ENCODE measurements at regions of chr13 and their contacts with region 1.

Region 1: GRCh38 chr13:35953537-35954206 is 177.5 kb downstream of the DCLK1 start:
- DNase-seq: peak; percentile 60 to 90
- ATAC-seq: peak; percentile 89 to 96 (median 94)
- H3K4me3 ChIP-seq: peak overlapping the region in 4 of 10 donors; percentile 12 to 23 (median 18)
- H3K27ac ChIP-seq: peak overlapping the region in 8 of 10 donors; percentile 5 to 57 (median 37)
- H3K4me1 ChIP-seq: peaks cover 0 to 31% (median 15%) of the 10 kb centered on the region in 9 donors
- H3K27me3 ChIP-seq: no peaks in the 10 kb centered on the region
- CTCF ChIP-seq: peak; percentile 37 to 86 (median 66)

Region 2: DNA sequence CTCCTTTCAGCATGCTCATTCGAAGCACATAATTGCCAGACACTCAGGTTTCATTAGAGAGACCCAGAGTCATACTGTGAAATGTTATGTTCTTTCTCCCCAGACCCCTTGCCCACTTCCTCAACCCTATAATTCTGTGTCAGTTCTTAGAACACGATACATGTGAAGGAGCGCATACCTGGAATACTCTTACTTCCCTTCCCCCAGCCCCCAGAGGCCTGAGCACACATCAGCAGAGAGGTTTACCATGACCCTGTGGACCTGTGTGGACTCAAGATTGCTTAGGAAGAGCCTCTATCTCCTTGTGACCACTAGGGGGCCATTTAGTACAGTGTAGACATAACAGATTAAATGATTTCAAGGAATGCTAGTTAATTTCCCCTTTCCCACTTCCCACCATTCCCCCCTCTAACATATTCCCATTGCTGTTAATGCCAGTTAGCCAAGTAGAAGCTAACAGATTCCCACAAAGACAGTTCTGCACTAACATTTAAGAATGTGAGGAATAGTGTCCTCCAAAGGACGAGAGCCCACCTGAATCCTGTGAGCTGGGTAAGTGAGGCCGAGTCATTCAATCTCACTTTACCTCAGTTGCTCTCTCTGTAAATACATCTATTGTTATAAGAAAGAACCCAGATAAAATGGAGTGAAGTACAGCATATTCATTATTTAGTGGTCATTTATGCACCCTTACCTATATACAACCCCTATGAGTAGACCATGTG is 323.0 kb before region 1 on chr13:
- intact Hi-C with region 1: loop called in 6 of 10 experiments (anchors 5 to 10 kb)
- DNase-seq: peak in 1 of 2 donors; percentile 7
- ATAC-seq: peak in 7 of 8 donors; percentile 68 to 81 (median 76)
- H3K4me3 ChIP-seq: no peak overlapping the region
- H3K27ac ChIP-seq: no peak overlapping the region
- H3K4me1 ChIP-seq: no peaks in the 10 kb centered on the region
- H3K27me3 ChIP-seq: no peaks in the 10 kb centered on the region
- CTCF ChIP-seq: peak; percentile 53 to 78 (median 69)

Region 3: GRCh38 chr13:35649162-35649561 is 304.5 kb before region 1 on chr13:
- intact Hi-C with region 1: no loop called
- DNase-seq: no peak
- ATAC-seq: peak in 1 of 8 donors; percentile 41
- H3K4me3 ChIP-seq: no peak overlapping the region
- H3K27ac ChIP-seq: no peak overlapping the region
- H3K4me1 ChIP-seq: peaks cover 0 to 9% (median 0%) of the 10 kb centered on the region in 9 donors
- H3K27me3 ChIP-seq: no peaks in the 10 kb centered on the region
- CTCF ChIP-seq: no peak

Region 4: GRCh38 chr13:35690581-35691207 is 263.0 kb before region 1 on chr13:
- intact Hi-C with region 1: no loop called
- DNase-seq: no peak
- ATAC-seq: peak in 7 of 8 donors; percentile 58 to 83 (median 73)
- H3K4me3 ChIP-seq: peak overlapping the region in 1 of 10 donors; percentile 10
- H3K27ac ChIP-seq: no peak overlapping the region
- H3K4me1 ChIP-seq: no peaks in the 10 kb centered on the region
- H3K27me3 ChIP-seq: no peaks in the 10 kb centered on the region
- CTCF ChIP-seq: no peak

Region 5: GRCh38 chr13:35729926-35730627 is 223.6 kb before region 1 on chr13:
- intact Hi-C with region 1: loop called in 4 of 10 experiments (anchors 5 to 10 kb)
- DNase-seq: peak; percentile 84 to 87
- ATAC-seq: peak; percentile 56 to 95 (median 88)
- H3K4me3 ChIP-seq: no peak overlapping the region
- H3K27ac ChIP-seq: peak overlapping the region in 9 of 10 donors; percentile 12 to 75 (median 54)
- H3K4me1 ChIP-seq: peaks cover 0 to 42% (median 19%) of the 10 kb centered on the region in 9 donors
- H3K27me3 ChIP-seq: no peaks in the 10 kb centered on the region
- CTCF ChIP-seq: no peak

Region 6: GRCh38 chr13:35838356-35838755 is 115.3 kb before region 1 on chr13:
- intact Hi-C with region 1: loop called in 2 of 10 experiments (anchors 10 kb)
- DNase-seq: no peak
- ATAC-seq: peak in 6 of 8 donors; percentile 21 to 74 (median 57)
- H3K4me3 ChIP-seq: no peak overlapping the region
- H3K27ac ChIP-seq: peak overlapping the region in 9 of 10 donors; percentile 16 to 77 (median 73)
- H3K4me1 ChIP-seq: peaks cover 0 to 24% (median 0%) of the 10 kb centered on the region in 9 donors
- H3K27me3 ChIP-seq: no peaks in the 10 kb centered on the region
- CTCF ChIP-seq: no peak

Region 7: GRCh38 chr13:35881360-35881759 is 72.3 kb before region 1 on chr13:
- intact Hi-C with region 1: loop called in 4 of 10 experiments (anchors 5 to 10 kb)
- DNase-seq: no peak
- ATAC-seq: peak in 6 of 8 donors; percentile 6 to 70 (median 31)
- H3K4me3 ChIP-seq: no peak overlapping the region
- H3K27ac ChIP-seq: peak overlapping the region in 4 of 10 donors; percentile 4 to 34 (median 23)
- H3K4me1 ChIP-seq: peaks cover 0 to 19% (median 8%) of the 10 kb centered on the region in 9 donors
- H3K27me3 ChIP-seq: no peaks in the 10 kb centered on the region
- CTCF ChIP-seq: no peak

Region 8: DNA sequence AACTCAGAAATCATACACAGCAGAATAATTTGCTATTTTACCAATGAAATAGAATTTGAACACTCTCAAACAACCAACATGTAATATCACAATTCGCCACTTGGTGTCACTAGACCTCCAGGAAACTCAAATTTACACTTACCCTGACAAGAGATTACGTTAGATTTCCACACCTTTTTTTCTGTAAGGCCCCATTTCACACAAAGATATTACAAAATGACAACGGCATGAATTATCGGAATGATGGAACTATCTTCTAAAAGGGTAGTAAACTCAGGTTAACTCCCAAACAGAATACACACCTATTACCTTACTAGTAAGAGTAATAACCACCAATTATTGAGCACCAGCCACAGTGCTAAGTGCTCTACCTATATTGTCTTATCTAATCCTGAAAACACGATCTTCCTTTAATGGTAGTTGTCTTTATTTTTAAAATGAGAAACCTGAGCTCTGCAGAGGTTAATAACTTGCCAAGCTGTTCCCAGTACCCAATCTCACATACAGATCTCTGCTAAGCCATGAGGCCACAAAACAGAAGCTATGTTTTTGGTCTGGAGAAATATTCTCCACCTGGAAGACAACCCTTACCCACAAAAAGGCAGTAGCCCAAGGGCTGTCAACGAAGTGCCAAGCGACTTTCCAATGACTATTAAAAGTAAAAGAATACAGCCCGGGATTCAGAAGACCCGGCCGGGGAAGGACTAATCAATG is 25.1 kb after region 1 on chr13:
- intact Hi-C with region 1: no loop called
- DNase-seq: peak in 1 of 2 donors; percentile 57
- ATAC-seq: peak in 6 of 8 donors; percentile 13 to 71 (median 59)
- H3K4me3 ChIP-seq: peak overlapping the region in 2 of 10 donors; percentile 7 to 8
- H3K27ac ChIP-seq: peak overlapping the region in 8 of 10 donors; percentile 5 to 77 (median 59)
- H3K4me1 ChIP-seq: peaks cover 0 to 15% (median 7%) of the 10 kb centered on the region in 9 donors
- H3K27me3 ChIP-seq: no peaks in the 10 kb centered on the region
- CTCF ChIP-seq: peak; percentile 72 to 90 (median 84)

Measured in heart right ventricle (tissue), 16 donors.